Lower leg skin (tissue), 4 donors: ENCODE measurements at regions of chr2 and their contacts with region 1.

Region 1: GRCh38 chr2:191521608-191522208 is 156.2 kb upstream of the NABP1 start:
- DNase-seq: no peak
- H3K4me3 ChIP-seq: no peak overlapping the region
- CTCF ChIP-seq: peak in 1 of 3 donors; percentile 34
- POLR2A ChIP-seq: no peak

Region 2: GRCh38 chr2:191165176-191165643 is 356.5 kb before region 1 on chr2:
- intact Hi-C with region 1: loop called (anchors 5 kb)
- DNase-seq: no peak
- H3K4me3 ChIP-seq: no peak overlapping the region
- CTCF ChIP-seq: no peak
- POLR2A ChIP-seq: no peak